Activated T-helper 1 cell treated with anti-CD3 and anti-CD28 coated beads, Interleukin-12 subunit alpha, Interleukin-12 subunit beta, Interleukin-2, Interleukin-4 antibody, amounts not matched to agents 30 ng/mL and 10 ng/mL and 1 ng/mL, durations not matched to agents 14 hours and 24 hours and 36 hours (primary cell): ENCODE measurements at regions of chr14 and their contacts with region 1.

Region 1: DNA sequence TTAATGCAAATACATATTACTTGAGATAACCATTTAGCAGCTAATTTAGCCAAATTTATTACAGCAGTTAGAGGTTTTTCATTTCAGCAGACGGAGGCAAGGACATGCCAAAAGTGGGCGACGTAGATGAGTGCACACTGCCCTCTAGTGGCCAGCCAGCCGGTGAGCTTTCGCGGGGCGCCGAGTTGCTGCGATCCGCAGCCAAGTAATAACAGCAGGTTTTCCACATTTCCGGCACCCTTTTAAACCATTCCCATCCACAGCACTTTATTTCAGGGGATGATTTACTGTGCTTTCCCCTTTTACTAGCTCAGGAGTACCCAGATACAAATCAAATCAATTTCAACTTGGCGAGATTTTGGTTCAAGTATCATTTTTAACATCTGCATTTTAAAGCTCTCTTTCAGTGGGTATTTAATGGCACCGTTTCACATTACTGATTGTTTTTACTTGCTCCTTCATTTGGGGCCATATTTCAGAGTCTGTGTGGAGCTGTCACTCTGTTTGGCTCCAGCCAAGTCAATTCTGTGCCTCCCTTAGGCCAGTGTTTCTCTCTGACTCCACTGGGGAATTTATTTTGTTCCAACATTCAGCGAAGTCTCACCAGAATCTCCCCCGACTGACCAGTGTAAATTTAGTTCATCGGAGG is 158.0 kb downstream of the EGLN3 start:
- DNase-seq: peak; percentile 46
- H3K4me3 Mint-ChIP-seq: peak overlapping the region; percentile 72
- H3K27ac Mint-ChIP-seq: no peak overlapping the region
- H3K4me1 Mint-ChIP-seq: peaks cover 24% of the 10 kb centered on the region
- H3K27me3 Mint-ChIP-seq: peaks cover 28% of the 10 kb centered on the region

Region 2: GRCh38 chr14:32710731-32711680 is 1081.8 kb before region 1 on chr14:
- intact Hi-C with region 1: loop called (anchors 1 kb)
- DNase-seq: no peak
- H3K4me3 Mint-ChIP-seq: no peak overlapping the region
- H3K27ac Mint-ChIP-seq: no peak overlapping the region
- H3K4me1 Mint-ChIP-seq: no peaks in the 10 kb centered on the region
- H3K27me3 Mint-ChIP-seq: peaks cover 2% of the 10 kb centered on the region

Region 3: GRCh38 chr14:32939254-32940065 is 853.4 kb before region 1 on chr14:
- intact Hi-C with region 1: loop called (anchors 10 kb)
- DNase-seq: no peak
- H3K4me3 Mint-ChIP-seq: peak overlapping the region; percentile 79
- H3K27ac Mint-ChIP-seq: peak overlapping the region; percentile 52
- H3K4me1 Mint-ChIP-seq: peaks cover 11% of the 10 kb centered on the region
- H3K27me3 Mint-ChIP-seq: peaks cover 65% of the 10 kb centered on the region

Region 4: GRCh38 chr14:33475623-33476022 is 317.2 kb before region 1 on chr14:
- intact Hi-C with region 1: loop called (anchors 1 kb)
- DNase-seq: no peak
- H3K4me3 Mint-ChIP-seq: no peak overlapping the region
- H3K27ac Mint-ChIP-seq: no peak overlapping the region
- H3K4me1 Mint-ChIP-seq: no peaks in the 10 kb centered on the region
- H3K27me3 Mint-ChIP-seq: peaks cover 4% of the 10 kb centered on the region

Region 5: DNA sequence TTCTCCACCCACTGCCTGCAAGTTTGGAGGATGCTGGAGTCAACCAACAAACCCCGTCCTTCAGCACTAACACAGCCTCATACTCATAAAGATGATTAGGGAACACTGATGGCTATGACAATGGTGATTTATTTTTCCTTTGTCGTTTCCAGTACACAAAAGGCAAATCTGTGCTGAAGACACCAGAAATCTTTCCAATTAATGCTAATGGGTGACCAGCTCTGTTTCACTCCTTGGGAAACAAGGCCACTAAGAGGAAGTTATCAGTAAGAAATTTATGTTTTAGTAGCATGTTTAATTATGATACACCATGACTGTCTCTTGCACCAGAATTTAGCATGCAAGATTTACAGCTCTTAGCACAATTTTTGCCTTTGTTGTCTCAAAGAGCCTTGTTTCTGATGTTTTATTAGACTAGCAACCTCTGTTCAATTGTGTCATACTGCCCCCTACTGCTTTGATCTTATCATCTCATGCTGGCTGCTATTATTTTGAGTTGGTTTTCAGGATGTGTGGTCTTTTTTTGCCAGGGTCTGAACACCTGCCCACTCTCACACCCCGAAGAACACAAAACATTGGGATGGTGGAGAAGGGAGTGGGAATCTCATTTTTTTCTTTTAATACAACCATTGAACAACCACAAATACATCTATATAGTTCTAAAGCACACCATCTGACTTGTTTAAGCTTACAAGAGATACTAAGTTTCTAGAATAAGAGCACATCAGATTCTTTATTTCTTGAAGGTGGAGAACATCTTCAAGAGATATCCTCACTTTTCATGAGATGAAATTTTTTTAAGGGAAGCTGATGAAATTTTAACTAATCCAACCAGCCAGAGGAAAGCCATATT is 508.3 kb after region 1 on chr14:
- intact Hi-C with region 1: loop called (anchors 5 kb)
- DNase-seq: no peak
- H3K4me3 Mint-ChIP-seq: no peak overlapping the region
- H3K27ac Mint-ChIP-seq: no peak overlapping the region
- H3K4me1 Mint-ChIP-seq: no peaks in the 10 kb centered on the region
- H3K27me3 Mint-ChIP-seq: peaks cover 1% of the 10 kb centered on the region